Activated B cell treated with CpG ODN at 0.5 μM for 24 hours (primary cell): ENCODE measurements at regions of chr5 and their contacts with region 1.

Region 1: GRCh38 chr5:93607367-93608258 is 24.6 kb downstream of the NR2F1 start:
- DNase-seq: no peak
- ATAC-seq: peak; percentile 64
- H3K4me3 Mint-ChIP-seq: peak overlapping the region; percentile 19
- H3K27ac Mint-ChIP-seq: no peak overlapping the region
- H3K4me1 Mint-ChIP-seq: peaks cover 15% of the 10 kb centered on the region
- H3K27me3 Mint-ChIP-seq: peaks cover 76% of the 10 kb centered on the region
- CTCF ChIP-seq: no peak

Region 2: GRCh38 chr5:93570294-93571113 is 37.1 kb before region 1 on chr5:
- CTCF ChIA-PET with region 1: interaction called, 4 read pairs
- POLR2A ChIA-PET with region 1: no interaction called
- intact Hi-C with region 1: loop called (anchors 5 kb)
- DNase-seq: no peak
- ATAC-seq: peak; percentile 45
- H3K4me3 Mint-ChIP-seq: peak overlapping the region; percentile 42
- H3K27ac Mint-ChIP-seq: no peak overlapping the region
- H3K4me1 Mint-ChIP-seq: peaks cover 17% of the 10 kb centered on the region
- H3K27me3 Mint-ChIP-seq: peaks cover 67% of the 10 kb centered on the region
- CTCF ChIP-seq: no peak

Region 3: DNA sequence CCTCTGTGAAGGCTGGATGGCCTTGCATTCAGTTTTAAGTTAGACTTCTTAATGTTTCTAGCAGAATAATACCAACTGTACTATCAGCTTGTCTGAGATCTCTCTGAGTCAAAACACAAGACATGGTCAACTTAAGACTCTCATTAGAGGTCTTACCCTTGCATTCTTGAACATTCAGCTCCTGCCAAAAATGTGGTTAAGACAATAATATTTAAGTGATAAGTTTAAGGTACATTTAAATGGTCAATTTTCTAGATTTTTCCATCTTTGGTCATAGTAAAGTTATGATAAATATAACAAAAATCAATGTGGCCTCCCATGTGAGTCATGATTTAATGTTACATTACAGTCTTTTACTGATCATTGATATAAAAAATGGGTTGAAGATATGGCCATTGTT is 50.4 kb after region 1 on chr5:
- CTCF ChIA-PET with region 1: no interaction called
- POLR2A ChIA-PET with region 1: no interaction called
- intact Hi-C with region 1: no loop called
- DNase-seq: no peak
- ATAC-seq: no peak
- H3K4me3 Mint-ChIP-seq: no peak overlapping the region
- H3K27ac Mint-ChIP-seq: no peak overlapping the region
- H3K4me1 Mint-ChIP-seq: no peaks in the 10 kb centered on the region
- H3K27me3 Mint-ChIP-seq: no peaks in the 10 kb centered on the region
- CTCF ChIP-seq: no peak